Activated CD4-positive, alpha-beta T cell treated with anti-CD3 and anti-CD28 coated beads for 36 hours (primary cell): ENCODE measurements at regions of chr1 and their contacts with region 1.

Region 1: GRCh38 chr1:11143907-11144306 is 44.2 kb upstream of the EXOSC10 start:
- DNase-seq: peak; percentile 26
- ATAC-seq: peak; percentile 74
- H3K4me3 Mint-ChIP-seq: no peak overlapping the region
- H3K27ac Mint-ChIP-seq: peak overlapping the region; percentile 83
- H3K4me1 Mint-ChIP-seq: peaks cover 15% of the 10 kb centered on the region
- H3K27me3 Mint-ChIP-seq: no peaks in the 10 kb centered on the region

Region 2: GRCh38 chr1:11237356-11237755 is 93.4 kb after region 1 on chr1:
- CTCF ChIA-PET with region 1: no interaction called
- POLR2A ChIA-PET with region 1: interaction called, 11 read pairs
- intact Hi-C with region 1: no loop called
- DNase-seq: no peak
- ATAC-seq: no peak
- H3K4me3 Mint-ChIP-seq: no peak overlapping the region
- H3K27ac Mint-ChIP-seq: no peak overlapping the region
- H3K4me1 Mint-ChIP-seq: peaks cover 9% of the 10 kb centered on the region
- H3K27me3 Mint-ChIP-seq: no peaks in the 10 kb centered on the region